Right ventricle myocardium inferior (tissue), 1 donor: ENCODE measurements at regions of chr3 and their contacts with region 1.

Region 1: GRCh38 chr3:31550452-31551251 is 17.9 kb downstream of the STT3B start:
- DNase-seq: no peak
- ATAC-seq: peak; percentile 33

Region 2: GRCh38 chr3:31521468-31521867 is 29.2 kb before region 1 on chr3:
- intact Hi-C with region 1: no loop called
- DNase-seq: no peak
- ATAC-seq: no peak

Region 3: DNA sequence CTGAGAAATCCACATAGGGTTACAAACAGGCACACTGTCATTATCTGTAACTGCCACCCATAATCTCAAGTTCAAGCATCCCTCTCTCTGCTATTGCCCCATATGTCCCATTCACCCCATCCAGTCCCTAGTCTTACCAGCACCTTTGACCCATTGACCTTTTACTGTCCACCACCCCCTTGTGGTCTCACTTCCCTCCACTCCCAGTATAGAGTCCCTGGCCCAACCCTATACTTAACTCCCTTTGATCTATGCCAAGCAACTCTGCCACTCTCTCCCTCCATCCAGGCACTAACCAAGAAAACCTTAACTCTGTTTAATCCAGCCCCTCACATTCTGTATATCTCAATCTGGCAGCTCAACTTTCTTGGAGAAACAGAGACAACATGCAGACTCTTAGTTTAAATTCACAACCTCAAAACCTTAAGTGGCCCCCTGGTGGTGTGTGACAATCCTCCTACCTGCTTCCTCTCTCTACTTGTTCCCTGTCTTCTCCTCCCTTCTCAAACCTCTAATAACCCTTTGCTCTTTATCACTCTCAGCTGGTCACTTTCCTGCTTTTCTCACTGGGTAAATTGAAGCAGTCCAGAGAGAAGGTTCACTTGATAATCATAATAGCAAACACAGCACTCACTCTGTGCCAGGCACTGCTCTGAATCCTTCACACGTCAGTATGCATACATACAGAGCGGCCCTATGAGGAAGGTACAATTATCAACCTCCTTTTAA is 144.8 kb after region 1 on chr3:
- intact Hi-C with region 1: loop called (anchors 5 kb)
- DNase-seq: no peak
- ATAC-seq: peak; percentile 23